Vagina (tissue), 2 donors: ENCODE measurements at regions of chr3 and their contacts with region 1.

Region 1: DNA sequence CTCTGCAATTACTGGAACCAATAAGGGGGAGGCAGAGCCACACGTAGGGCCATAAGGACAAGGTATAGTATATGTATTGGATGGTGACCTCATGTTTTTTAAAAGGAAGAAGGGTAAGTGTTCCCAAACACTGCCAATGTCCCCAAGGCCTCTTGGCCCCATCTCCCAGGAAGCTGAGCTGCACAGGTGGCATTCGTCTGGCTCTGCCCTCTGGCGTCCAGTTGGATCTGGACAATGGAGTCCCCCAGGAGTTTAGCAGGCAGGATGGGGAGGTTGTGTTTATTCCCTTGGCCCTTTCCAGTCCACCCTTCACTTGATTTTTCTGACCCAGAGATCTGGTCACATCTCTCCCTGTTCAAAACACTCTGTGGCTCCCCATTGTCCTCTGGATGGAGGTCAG is 22.5 kb downstream of the C3orf18 start:
- DNase-seq: no peak
- H3K4me3 ChIP-seq: no peak overlapping the region
- H3K27ac ChIP-seq: no peak overlapping the region
- H3K4me1 ChIP-seq: no peaks in the 10 kb centered on the region
- H3K27me3 ChIP-seq: no peaks in the 10 kb centered on the region
- CTCF ChIP-seq: no peak
- POLR2A ChIP-seq: no peak

Region 2: GRCh38 chr3:50227390-50228183 is 317.4 kb before region 1 on chr3:
- intact Hi-C with region 1: no loop called
- DNase-seq: peak in 1 of 2 donors; percentile 93
- H3K4me3 ChIP-seq: peak overlapping the region; percentile 72 to 90
- H3K27ac ChIP-seq: peak overlapping the region; percentile 91
- H3K4me1 ChIP-seq: peaks cover 25% of the 10 kb centered on the region
- H3K27me3 ChIP-seq: no peaks in the 10 kb centered on the region
- CTCF ChIP-seq: peak; percentile 72 to 93 (median 72)
- POLR2A ChIP-seq: no peak

Region 3: DNA sequence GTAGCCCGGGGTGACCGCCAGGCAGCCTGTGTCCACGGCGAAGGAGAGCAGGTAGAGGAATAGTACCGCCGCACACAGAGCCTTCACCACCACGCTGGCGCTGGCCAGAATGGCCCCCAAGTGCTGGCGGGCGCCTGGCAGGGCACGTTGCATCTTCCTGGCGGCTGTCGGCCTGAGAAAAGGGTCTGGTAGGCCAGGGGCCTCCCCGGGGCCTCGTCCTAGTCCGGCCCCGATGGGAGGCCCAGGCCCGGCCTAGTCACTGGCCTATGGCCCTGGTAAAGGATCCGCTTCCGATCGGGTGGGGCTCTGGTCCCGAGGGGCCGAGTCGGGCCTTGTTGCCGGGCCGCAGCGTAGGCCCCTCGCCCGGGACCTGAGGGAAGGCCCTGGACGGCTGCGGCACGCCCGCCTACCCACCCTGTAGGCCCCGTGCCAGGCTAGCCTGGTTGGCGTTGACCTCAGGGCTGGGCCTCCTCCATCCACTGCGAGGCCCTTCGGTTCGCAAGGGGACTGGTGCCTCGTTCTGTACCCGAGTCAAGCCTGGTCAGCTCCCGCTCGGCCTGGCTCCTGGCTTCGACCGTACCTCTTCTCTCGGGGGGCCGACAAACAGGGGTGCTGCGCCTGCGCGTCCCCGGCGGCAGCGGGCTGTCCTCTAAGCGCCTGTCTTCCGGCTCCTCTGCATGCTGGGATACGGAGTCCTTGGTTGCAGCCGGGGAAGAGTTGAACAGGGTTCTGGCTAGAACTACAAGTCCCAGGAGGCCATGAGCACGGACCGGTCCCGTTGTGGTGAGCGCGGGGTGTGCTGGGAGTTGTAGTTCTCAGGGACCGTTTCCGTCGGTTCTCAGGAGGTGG is 185.9 kb before region 1 on chr3 and contains the start of gene TMEM115:
- intact Hi-C with region 1: loop called (anchors 5 kb)
- DNase-seq: peak; percentile 99 to 100
- H3K4me3 ChIP-seq: peak within 1 kb of the TSS; percentile 69 to 72
- H3K27ac ChIP-seq: peak within 1 kb of the TSS; percentile 78
- H3K4me1 ChIP-seq: peaks cover 48% of the 10 kb centered on the region
- H3K27me3 ChIP-seq: no peaks in the 10 kb centered on the region
- CTCF ChIP-seq: no peak
- POLR2A ChIP-seq: peak in 1 of 2 donors; percentile 46
- total RNA-seq, gene TMEM115: 51.1 TPM

Region 4: GRCh38 chr3:50724831-50725230 is 179.8 kb after region 1 on chr3:
- intact Hi-C with region 1: no loop called
- DNase-seq: no peak
- H3K4me3 ChIP-seq: no peak overlapping the region
- H3K27ac ChIP-seq: no peak overlapping the region
- H3K4me1 ChIP-seq: no peaks in the 10 kb centered on the region
- H3K27me3 ChIP-seq: no peaks in the 10 kb centered on the region
- CTCF ChIP-seq: no peak
- POLR2A ChIP-seq: no peak

Region 5: GRCh38 chr3:50978991-50979667 is 434.1 kb after region 1 on chr3:
- intact Hi-C with region 1: no loop called
- DNase-seq: no peak
- H3K4me3 ChIP-seq: no peak overlapping the region
- H3K27ac ChIP-seq: no peak overlapping the region
- H3K4me1 ChIP-seq: no peaks in the 10 kb centered on the region
- H3K27me3 ChIP-seq: no peaks in the 10 kb centered on the region
- CTCF ChIP-seq: no peak
- POLR2A ChIP-seq: no peak